ENCODE measurements at regions of chr12 and their contacts with region 1.

Region 1: GRCh38 chr12:1634590-1635191 is 5.7 kb downstream of the WNT5B start:
- DNase-seq: peak; percentile 71 to 78
- H3K4me3 ChIP-seq: no peak overlapping the region
- H3K27ac ChIP-seq: no peak overlapping the region
- H3K4me1 ChIP-seq: no peaks in the 10 kb centered on the region
- H3K27me3 ChIP-seq: no peaks in the 10 kb centered on the region
- CTCF ChIP-seq: peak; percentile 70 to 88 (median 82)
- POLR2A ChIP-seq: no peak

Region 2: DNA sequence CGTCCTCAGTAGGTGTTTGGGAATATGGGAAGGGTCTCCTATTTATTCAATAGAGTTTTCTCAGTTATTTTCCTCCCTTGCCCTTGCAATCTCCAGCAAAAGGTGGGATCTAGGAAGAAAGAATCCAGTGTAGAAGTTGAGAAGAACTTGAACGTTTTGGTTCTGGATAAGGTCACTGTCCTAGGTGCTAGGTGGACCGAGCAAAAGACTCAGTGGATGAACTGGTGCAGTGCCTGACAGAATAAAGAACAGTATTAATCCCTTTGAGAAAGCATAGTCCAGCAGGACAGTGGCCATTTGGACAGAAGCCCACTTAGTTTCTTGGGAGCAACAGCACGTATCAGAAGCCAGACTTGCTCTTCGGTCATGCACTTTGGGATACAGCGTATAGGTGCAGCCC is 153.0 kb after region 1 on chr12:
- intact Hi-C with region 1: loop called (anchors 5 kb)
- DNase-seq: no peak
- H3K4me3 ChIP-seq: no peak overlapping the region
- H3K27ac ChIP-seq: peak overlapping the region in 1 of 2 donors; percentile 9
- H3K4me1 ChIP-seq: no peaks in the 10 kb centered on the region
- H3K27me3 ChIP-seq: no peaks in the 10 kb centered on the region
- CTCF ChIP-seq: no peak
- POLR2A ChIP-seq: no peak

Region 3: GRCh38 chr12:2358986-2359658 is 724.4 kb after region 1 on chr12:
- intact Hi-C with region 1: no loop called
- DNase-seq: no peak
- H3K4me3 ChIP-seq: no peak overlapping the region
- H3K27ac ChIP-seq: peak overlapping the region; percentile 59 to 66
- H3K4me1 ChIP-seq: no peaks in the 10 kb centered on the region
- H3K27me3 ChIP-seq: no peaks in the 10 kb centered on the region
- CTCF ChIP-seq: no peak
- POLR2A ChIP-seq: no peak